ENCODE measurements at regions of chr12 and their contacts with region 1.

Region 1: GRCh38 chr12:57583008-57583831 is 7.8 kb upstream of the PIP4K2C start:
- DNase-seq: peak; percentile 73
- H3K4me3 Mint-ChIP-seq: no peak overlapping the region
- H3K27ac Mint-ChIP-seq: no peak overlapping the region
- H3K4me1 Mint-ChIP-seq: no peaks in the 10 kb centered on the region
- H3K27me3 Mint-ChIP-seq: peaks cover 2% of the 10 kb centered on the region

Region 2: DNA sequence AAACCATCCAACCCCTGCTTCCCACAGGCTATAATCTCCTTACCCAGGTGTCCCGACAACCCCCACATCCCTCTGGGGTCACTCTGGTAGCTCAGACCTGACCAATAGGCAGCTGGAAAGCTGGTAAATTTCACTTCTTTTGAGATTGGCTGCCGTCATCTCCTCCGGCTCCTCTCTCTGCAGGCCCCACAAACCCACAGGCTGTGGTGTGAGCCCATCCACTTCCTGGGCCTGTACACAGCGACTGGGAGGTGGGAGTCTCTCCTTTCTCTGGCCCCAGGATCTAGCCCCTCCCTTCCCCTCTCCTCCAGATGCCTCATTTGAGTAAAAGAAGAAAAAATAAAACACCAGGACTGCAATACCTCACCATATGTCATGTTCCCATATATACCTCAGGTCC is 147.9 kb before region 1 on chr12:
- CTCF ChIA-PET with region 1: no interaction called
- POLR2A ChIA-PET with region 1: no interaction called
- intact Hi-C with region 1: no loop called
- DNase-seq: no peak
- H3K4me3 Mint-ChIP-seq: no peak overlapping the region
- H3K27ac Mint-ChIP-seq: no peak overlapping the region
- H3K4me1 Mint-ChIP-seq: peaks cover 17% of the 10 kb centered on the region
- H3K27me3 Mint-ChIP-seq: no peaks in the 10 kb centered on the region

Region 3: DNA sequence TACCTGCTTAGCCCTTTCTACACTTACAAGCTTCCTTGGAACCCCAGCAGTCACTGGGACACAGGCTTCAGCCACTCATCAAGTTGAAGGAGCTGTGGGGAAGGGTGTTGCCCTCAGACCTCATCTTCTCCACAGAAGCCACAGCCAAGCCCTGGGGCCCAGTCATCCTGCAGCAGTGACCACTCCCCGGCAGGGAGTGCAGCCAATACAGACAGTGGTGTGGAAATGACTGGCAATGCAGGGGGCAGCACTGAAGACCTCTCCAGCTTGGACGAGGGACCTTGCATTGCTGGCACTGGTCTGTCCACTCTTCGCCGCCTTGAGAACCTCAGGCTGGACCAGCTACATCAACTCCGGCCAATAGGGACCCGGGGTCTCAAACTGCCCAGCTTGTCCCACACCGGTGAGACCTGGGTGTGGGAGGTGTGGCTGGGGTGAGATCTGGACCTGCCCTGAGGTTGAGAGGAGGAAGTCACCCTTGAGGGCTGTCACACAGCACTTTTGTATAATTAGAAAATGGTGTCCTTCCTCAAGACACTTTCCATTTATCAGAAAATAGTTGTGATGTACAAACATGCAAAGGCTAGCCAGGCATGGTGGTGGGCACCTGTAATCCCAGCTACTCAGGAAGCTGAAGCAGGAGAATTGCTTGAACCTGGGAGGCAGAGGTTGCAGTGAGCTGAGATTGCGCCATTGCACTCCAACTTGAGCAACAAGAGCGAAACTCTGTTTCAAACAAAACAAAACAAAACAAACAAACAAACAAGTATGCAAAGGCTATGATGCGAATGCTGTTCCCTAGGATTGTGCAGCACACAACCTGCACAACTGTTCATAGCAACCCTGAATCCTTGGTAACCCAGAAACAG is 113.7 kb before region 1 on chr12:
- CTCF ChIA-PET with region 1: no interaction called
- POLR2A ChIA-PET with region 1: no interaction called
- intact Hi-C with region 1: no loop called
- DNase-seq: no peak
- H3K4me3 Mint-ChIP-seq: no peak overlapping the region
- H3K27ac Mint-ChIP-seq: no peak overlapping the region
- H3K4me1 Mint-ChIP-seq: peaks cover 22% of the 10 kb centered on the region
- H3K27me3 Mint-ChIP-seq: no peaks in the 10 kb centered on the region

Region 4: DNA sequence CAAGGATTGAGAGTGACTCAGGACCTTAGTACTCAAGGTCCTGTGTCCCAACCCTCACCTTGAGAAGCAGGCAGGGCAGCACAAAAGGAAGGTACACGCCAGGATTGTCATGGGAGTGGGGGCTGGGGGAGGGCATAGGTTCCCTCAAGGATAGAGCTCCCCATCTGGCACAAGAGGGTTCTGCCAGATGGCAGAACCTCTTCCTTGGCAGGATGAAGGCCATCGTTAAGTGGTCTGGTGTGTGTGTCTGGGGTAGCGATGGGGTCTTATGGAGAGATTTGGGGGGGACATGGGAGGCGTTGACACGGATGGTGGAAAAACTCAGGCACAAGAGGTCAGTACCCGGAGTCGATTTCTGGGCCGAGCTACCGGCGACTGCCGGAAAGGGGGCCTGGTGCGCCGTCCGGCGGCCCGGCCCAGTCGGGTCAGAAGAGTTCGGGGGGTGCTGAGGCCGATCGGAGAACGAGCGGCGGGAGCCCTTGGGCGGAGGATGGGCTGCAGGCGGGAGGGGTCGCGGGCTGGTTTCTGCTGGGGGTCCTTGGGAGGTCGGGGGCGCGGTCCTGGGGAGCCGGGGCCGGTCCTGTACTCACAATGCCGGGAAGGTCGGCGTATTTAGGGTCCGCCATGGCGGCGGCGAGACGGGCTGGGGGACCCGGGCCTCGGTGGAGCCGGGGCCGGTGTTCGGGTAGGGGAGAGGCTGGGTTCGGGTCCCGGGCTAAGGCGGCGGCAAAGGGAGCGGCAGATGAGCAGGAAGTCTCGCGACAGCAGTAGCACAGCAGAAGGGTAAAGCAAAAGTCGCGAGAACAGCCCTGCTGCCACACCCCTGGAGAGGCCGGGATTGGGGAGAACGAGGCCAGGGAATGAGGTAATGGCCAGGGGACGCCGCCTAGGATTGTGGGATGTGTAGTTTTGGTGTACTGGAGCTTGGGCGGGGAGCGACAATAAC is 36.5 kb before region 1 on chr12 and contains the start of gene DCTN2:
- CTCF ChIA-PET with region 1: interaction called, 10 read pairs
- POLR2A ChIA-PET with region 1: no interaction called
- intact Hi-C with region 1: no loop called
- DNase-seq: peak; percentile 98
- H3K4me3 Mint-ChIP-seq: peak within 1 kb of the TSS; percentile 97
- H3K27ac Mint-ChIP-seq: peak within 1 kb of the TSS; percentile 87
- H3K4me1 Mint-ChIP-seq: peaks cover 49% of the 10 kb centered on the region
- H3K27me3 Mint-ChIP-seq: peaks cover 5% of the 10 kb centered on the region
- total RNA-seq, gene DCTN2: 81.0 to 85.2 TPM

Region 5: DNA sequence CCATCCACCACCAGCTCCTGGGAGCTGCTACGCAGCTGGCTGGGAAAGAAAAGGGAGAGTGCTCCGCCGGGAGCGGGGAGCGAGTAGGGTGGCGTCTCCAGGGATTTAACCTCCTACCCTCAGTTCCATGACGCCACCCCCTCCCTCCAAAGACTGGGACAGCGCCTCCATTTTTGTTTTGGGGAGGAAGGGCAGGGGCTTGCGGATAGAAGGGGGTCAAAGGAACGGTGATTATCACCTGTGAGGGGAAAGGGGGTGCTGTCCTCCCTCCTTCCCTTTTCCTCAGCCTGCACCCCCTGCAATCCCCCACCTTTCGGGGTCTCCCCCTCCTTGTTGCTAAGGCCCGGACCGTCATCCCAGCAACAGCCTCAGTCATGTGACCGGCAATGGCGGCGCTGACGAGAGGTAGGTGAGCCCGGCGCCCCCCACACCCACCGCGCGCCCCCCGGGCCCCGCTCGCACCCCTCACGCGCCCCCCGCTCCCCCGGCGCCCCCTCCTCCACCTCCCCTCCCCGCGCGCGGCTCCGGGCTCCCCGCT is 21.3 kb after region 1 on chr12 and contains the start of gene DTX3:
- CTCF ChIA-PET with region 1: interaction called, 26 read pairs
- POLR2A ChIA-PET with region 1: no interaction called
- intact Hi-C with region 1: no loop called
- DNase-seq: peak; percentile 64
- H3K4me3 Mint-ChIP-seq: peak within 1 kb of the TSS; percentile 74
- H3K27ac Mint-ChIP-seq: peak within 1 kb of the TSS; percentile 68
- H3K4me1 Mint-ChIP-seq: peaks cover 22% of the 10 kb centered on the region
- H3K27me3 Mint-ChIP-seq: no peaks in the 10 kb centered on the region
- total RNA-seq, gene DTX3: 15.4 to 15.8 TPM

Region 6: GRCh38 chr12:57621497-57622292 is 38.5 kb after region 1 on chr12:
- CTCF ChIA-PET with region 1: interaction called, 112 read pairs
- POLR2A ChIA-PET with region 1: interaction called, 3 read pairs
- intact Hi-C with region 1: loop called (anchors 1 kb)
- DNase-seq: peak; percentile 68
- H3K4me3 Mint-ChIP-seq: peak overlapping the region; percentile 63
- H3K27ac Mint-ChIP-seq: no peak overlapping the region
- H3K4me1 Mint-ChIP-seq: peaks cover 24% of the 10 kb centered on the region
- H3K27me3 Mint-ChIP-seq: peaks cover 88% of the 10 kb centered on the region

Region 7: GRCh38 chr12:57632694-57633477 is 49.7 kb after region 1 on chr12 and contains the start of gene B4GALNT1:
- CTCF ChIA-PET with region 1: interaction called, 43 read pairs
- POLR2A ChIA-PET with region 1: no interaction called
- intact Hi-C with region 1: loop called (anchors 1 kb)
- DNase-seq: peak; percentile 73
- H3K4me3 Mint-ChIP-seq: peak within 1 kb of the TSS; percentile 71
- H3K27ac Mint-ChIP-seq: no peak within 1 kb of the TSS
- H3K4me1 Mint-ChIP-seq: peaks cover 11% of the 10 kb centered on the region
- H3K27me3 Mint-ChIP-seq: peaks cover 43% of the 10 kb centered on the region
- total RNA-seq, gene B4GALNT1: 1.7 to 2.1 TPM

Region 8: GRCh38 chr12:57693659-57694458 is 110.6 kb after region 1 on chr12 and contains the start of gene OS9:
- CTCF ChIA-PET with region 1: interaction called, 35 read pairs
- POLR2A ChIA-PET with region 1: no interaction called
- intact Hi-C with region 1: loop called (anchors 1 kb)
- DNase-seq: peak; percentile 97
- H3K4me3 Mint-ChIP-seq: no peak within 1 kb of the TSS
- H3K27ac Mint-ChIP-seq: no peak within 1 kb of the TSS
- H3K4me1 Mint-ChIP-seq: no peaks in the 10 kb centered on the region
- H3K27me3 Mint-ChIP-seq: peaks cover under 1% of the 10 kb centered on the region
- total RNA-seq, gene OS9: 73.4 to 74.8 TPM

Region 9: DNA sequence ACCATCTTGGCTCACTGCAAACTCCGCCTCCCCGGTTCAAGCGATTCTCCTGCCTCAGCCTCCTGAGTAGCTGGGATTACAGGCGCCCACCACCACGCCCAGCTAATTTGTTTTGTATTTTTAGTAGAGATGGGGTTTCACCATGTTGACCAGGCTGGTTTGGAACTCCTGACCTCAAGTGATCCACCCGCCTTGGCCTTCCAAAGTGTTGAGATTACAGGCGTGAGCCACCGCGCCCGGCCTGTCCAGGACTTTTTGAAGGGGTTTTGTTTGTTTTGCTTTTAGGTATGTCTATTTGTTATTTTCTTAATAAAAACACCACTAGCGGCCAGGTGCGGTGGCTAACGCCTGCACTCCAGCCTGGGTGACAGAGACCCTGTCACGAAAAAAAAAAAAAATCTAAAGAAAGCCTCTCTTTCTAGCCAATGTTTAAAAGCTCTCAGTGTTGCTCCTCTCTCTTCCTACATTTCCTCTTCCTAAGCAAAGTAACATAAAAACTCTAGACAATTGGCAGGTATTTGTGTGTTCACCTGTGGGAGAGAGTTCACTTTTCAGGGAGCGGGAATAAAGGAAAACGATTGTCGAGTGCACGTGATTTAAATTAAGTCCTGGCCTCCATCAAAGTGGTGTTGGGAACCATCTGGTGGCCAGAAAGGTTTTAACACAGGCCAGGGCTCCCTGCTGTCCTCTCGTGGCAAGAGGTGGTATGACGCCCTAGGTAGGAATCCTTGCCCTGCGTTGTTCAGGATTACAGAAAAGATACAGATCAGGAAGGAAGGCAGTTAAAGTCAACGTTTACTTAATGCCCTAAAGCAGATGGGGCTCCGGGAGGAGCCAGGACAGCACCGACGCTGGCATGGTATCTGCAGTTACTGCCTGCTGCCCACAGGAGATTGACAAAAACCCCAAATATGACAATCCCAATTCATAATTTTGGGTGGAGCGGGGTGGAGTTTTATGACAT is 321.9 kb after region 1 on chr12:
- CTCF ChIA-PET with region 1: interaction called, 6 read pairs
- POLR2A ChIA-PET with region 1: no interaction called
- intact Hi-C with region 1: loop called (anchors 5 kb)
- DNase-seq: peak; percentile 91
- H3K4me3 Mint-ChIP-seq: peak overlapping the region; percentile 52
- H3K27ac Mint-ChIP-seq: peak overlapping the region; percentile 10
- H3K4me1 Mint-ChIP-seq: peaks cover 7% of the 10 kb centered on the region
- H3K27me3 Mint-ChIP-seq: peaks cover 14% of the 10 kb centered on the region

Measured in activated CD4-positive, alpha-beta memory T cell treated with anti-CD3 and anti-CD28 coated beads for 36 hours (primary cell).